ENCODE measurements at regions of chr2 and their contacts with region 1.

Region 1: DNA sequence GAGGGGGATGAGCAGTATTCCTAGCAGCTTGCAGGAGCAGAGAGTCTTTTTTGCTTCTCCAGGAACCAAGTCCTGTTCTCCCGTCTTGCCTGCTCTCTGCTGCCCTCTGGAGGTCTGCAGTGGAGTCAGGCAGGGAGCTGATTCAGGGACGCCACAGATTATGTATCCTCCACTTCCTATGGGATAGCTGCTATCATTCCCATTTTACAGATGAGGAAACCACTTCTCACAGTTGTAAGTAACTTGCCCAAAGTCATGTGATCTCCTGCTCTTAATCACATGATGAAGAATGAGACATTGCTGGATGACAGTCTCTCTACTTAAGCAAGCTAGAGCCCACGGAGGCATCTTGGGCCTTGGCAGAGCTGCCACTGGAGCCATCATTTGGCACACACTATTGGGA is 8.3 kb downstream of the SLC4A5 start:
- DNase-seq: peak; percentile 75
- H3K4me3 Mint-ChIP-seq: no peak overlapping the region
- H3K27ac Mint-ChIP-seq: no peak overlapping the region
- H3K4me1 Mint-ChIP-seq: no peaks in the 10 kb centered on the region
- H3K27me3 Mint-ChIP-seq: peaks cover 7% of the 10 kb centered on the region
- CTCF ChIP-seq: peak; percentile 88

Region 2: DNA sequence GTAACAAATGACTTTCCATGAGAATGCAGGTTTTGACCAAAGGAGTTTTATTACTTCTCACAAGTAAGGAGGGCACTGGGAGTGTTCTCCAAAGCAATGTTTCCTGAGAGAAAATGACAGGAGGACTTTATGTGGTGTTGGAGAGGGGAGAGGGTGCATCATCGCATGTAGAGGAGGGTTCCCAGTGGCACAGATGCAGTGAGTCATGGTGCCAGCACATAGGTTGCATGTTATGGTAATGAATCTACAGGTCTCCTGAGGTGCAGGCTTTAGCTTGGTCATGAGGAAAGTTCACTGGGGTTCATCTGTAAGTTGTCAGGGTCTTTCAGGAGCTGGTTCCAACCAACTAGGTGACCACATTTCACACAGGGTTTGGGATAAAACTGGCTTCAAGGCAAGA is 723.1 kb before region 1 on chr2:
- CTCF ChIA-PET with region 1: no interaction called
- POLR2A ChIA-PET with region 1: no interaction called
- intact Hi-C with region 1: no loop called
- DNase-seq: peak; percentile 5
- H3K4me3 Mint-ChIP-seq: no peak overlapping the region
- H3K27ac Mint-ChIP-seq: no peak overlapping the region
- H3K4me1 Mint-ChIP-seq: no peaks in the 10 kb centered on the region
- H3K27me3 Mint-ChIP-seq: no peaks in the 10 kb centered on the region
- CTCF ChIP-seq: no peak

Region 3: GRCh38 chr2:74178201-74179062 is 156.5 kb before region 1 on chr2 and contains the start of gene MOB1A:
- CTCF ChIA-PET with region 1: interaction called, 15 read pairs
- POLR2A ChIA-PET with region 1: interaction called, 8 read pairs
- intact Hi-C with region 1: no loop called
- DNase-seq: peak; percentile 99
- H3K4me3 Mint-ChIP-seq: peak within 1 kb of the TSS; percentile 78
- H3K27ac Mint-ChIP-seq: peak within 1 kb of the TSS; percentile 61
- H3K4me1 Mint-ChIP-seq: peaks cover 19% of the 10 kb centered on the region
- H3K27me3 Mint-ChIP-seq: no peaks in the 10 kb centered on the region
- CTCF ChIP-seq: no peak
- total RNA-seq, gene MOB1A: 92.6 and 97.5 TPM in 2 replicates

Region 4: GRCh38 chr2:74267068-74267467 is 67.9 kb before region 1 on chr2:
- CTCF ChIA-PET with region 1: interaction called, 9 read pairs
- POLR2A ChIA-PET with region 1: no interaction called
- intact Hi-C with region 1: loop called (anchors 1 kb)
- DNase-seq: peak; percentile 63
- H3K4me3 Mint-ChIP-seq: no peak overlapping the region
- H3K27ac Mint-ChIP-seq: no peak overlapping the region
- H3K4me1 Mint-ChIP-seq: no peaks in the 10 kb centered on the region
- H3K27me3 Mint-ChIP-seq: no peaks in the 10 kb centered on the region
- CTCF ChIP-seq: peak; percentile 40

Region 5: DNA sequence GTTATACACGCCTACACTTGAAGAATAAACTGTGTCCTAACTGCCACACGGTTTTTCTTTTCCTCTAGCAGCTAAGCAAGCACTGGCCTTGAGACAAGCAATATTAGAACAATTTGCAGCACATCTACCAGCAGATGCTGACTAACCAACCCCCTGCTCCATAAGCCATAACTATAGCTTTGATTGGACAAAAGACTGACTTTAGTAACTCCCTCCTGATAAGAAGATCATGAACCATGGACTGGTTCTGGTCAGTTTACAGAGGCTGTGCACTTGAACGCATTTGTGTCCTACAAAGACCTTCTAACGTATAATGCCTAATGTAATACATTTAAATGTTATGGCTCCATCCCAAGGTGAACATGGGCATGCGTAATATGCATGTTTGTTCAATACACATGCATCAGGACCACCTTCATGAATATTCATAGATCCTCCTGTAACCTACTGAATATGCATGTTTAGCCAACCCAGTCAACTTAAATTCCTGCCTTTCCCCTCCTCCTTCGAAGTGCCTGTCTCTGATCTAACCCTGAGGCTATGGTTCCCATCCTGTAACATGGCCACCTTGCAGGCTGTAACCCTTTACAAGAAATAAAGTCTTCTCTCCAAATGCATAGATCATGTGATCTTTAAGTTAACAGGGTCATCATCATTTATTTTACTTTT is 18.2 kb before region 1 on chr2:
- CTCF ChIA-PET with region 1: interaction called, 11 read pairs
- POLR2A ChIA-PET with region 1: interaction called, 8 read pairs
- intact Hi-C with region 1: no loop called
- DNase-seq: no peak
- H3K4me3 Mint-ChIP-seq: no peak overlapping the region
- H3K27ac Mint-ChIP-seq: no peak overlapping the region
- H3K4me1 Mint-ChIP-seq: peaks cover 5% of the 10 kb centered on the region
- H3K27me3 Mint-ChIP-seq: peaks cover 8% of the 10 kb centered on the region
- CTCF ChIP-seq: no peak

Region 6: DNA sequence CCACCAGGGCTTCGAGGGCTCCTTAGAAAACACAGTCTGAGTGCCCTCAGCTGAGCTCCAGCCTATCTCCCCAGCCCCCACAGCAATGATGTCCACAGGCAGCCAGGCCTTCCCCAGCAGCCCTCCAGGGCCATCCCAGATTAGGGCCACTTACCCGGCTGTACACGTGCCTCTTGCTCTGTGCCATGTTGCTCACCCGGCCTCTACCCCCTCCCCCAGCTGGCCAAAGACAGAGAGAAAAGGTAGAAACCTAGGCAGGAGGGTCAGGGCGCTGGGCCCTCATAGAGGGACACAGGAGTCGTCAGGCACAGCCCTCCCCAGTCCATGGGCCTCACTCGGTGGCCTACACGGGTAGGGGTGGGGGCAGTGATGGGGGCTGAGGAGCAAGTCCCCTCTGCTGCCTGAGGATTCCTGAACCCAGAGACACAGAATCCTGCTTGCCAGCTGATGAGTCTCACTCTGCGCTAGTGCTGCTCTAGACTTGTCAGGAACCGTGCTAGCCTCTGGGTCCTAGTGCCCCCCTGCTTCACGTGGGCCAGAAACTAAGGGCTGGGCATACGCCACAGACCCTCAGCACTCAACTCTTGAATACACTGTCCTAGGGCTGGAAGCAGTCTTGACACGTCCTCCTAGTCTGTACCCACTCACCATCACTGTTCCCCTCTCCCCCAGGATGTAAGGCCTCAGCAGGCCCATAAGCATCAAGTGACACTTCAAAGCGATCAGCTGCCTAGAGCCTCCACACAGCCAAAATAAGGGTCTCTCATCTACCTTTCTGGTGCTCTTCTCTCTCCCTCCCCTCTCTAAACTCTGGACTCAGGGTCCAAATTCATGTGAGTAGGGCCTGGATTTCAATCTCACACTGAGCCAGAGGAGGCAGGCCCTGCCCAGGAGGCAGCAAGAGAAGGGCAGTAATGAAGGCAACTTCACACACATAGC is 45.2 kb after region 1 on chr2 and contains the start of gene DCTN1:
- CTCF ChIA-PET with region 1: interaction called, 13 read pairs
- POLR2A ChIA-PET with region 1: no interaction called
- intact Hi-C with region 1: no loop called
- DNase-seq: peak; percentile 52
- H3K4me3 Mint-ChIP-seq: peak within 1 kb of the TSS; percentile 43
- H3K27ac Mint-ChIP-seq: no peak within 1 kb of the TSS
- H3K4me1 Mint-ChIP-seq: peaks cover 34% of the 10 kb centered on the region
- H3K27me3 Mint-ChIP-seq: no peaks in the 10 kb centered on the region
- CTCF ChIP-seq: no peak
- total RNA-seq, gene DCTN1: 113 and 117 TPM in 2 replicates

Region 7: GRCh38 chr2:74529357-74530238 is 194.7 kb after region 1 on chr2 and contains the starts of genes AUP1 and HTRA2:
- CTCF ChIA-PET with region 1: no interaction called
- POLR2A ChIA-PET with region 1: no interaction called
- intact Hi-C with region 1: loop called (anchors 5 kb)
- DNase-seq: peak; percentile 99
- H3K4me3 Mint-ChIP-seq: peak within 1 kb of the TSS; percentile 94
- H3K27ac Mint-ChIP-seq: peak within 1 kb of the TSS; percentile 91
- H3K4me1 Mint-ChIP-seq: peaks cover 38% of the 10 kb centered on the region
- H3K27me3 Mint-ChIP-seq: no peaks in the 10 kb centered on the region
- CTCF ChIP-seq: no peak
- total RNA-seq, gene AUP1: 138 and 140 TPM in 2 replicates
- total RNA-seq, gene HTRA2: 27.6 and 33.0 TPM in 2 replicates